Activated CD4-positive, alpha-beta memory T cell treated with anti-CD3 and anti-CD28 coated beads, Interleukin-2, amount 10 ng/mL, durations not matched to agents 7 days and 5 days (primary cell): ENCODE measurements at regions of chr12 and their contacts with region 1.

Region 1: GRCh38 chr12:47079468-47079980 is at the starts of genes AMIGO2 and PCED1B:
- DNase-seq: peak; percentile 68
- H3K4me3 Mint-ChIP-seq: peak within 1 kb of the TSS; percentile 92
- H3K27ac Mint-ChIP-seq: peak within 1 kb of the TSS; percentile 79
- H3K4me1 Mint-ChIP-seq: peaks cover 67% of the 10 kb centered on the region
- H3K27me3 Mint-ChIP-seq: no peaks in the 10 kb centered on the region
- total RNA-seq, gene AMIGO2: 6.6 to 7.1 TPM
- total RNA-seq, gene PCED1B: 57.1 to 62.2 TPM

Region 2: DNA sequence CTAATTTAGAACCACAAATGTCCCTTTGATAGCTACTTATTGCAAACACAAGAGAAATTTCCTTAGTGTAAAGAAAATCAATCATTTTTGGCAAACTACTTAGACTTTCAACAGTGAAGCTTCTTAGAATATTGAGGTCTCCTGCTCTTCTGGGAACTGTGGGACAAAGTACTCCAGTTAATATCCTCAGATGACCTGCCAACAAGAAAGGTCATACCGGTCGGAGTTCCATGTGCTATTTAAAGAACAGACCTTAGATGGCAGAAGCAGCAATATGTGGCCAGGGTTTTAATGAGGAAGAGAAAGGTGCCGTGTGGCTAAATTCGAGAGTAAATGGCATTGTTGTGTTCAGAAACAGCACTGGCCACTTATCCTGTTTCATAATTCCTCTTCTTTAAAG is 115.0 kb after region 1 on chr12:
- CTCF ChIA-PET with region 1: interaction called, 27 read pairs
- POLR2A ChIA-PET with region 1: interaction called, 20 read pairs
- DNase-seq: no peak
- H3K4me3 Mint-ChIP-seq: no peak overlapping the region
- H3K27ac Mint-ChIP-seq: peak overlapping the region; percentile 84
- H3K4me1 Mint-ChIP-seq: peaks cover 56% of the 10 kb centered on the region
- H3K27me3 Mint-ChIP-seq: no peaks in the 10 kb centered on the region

Region 3: DNA sequence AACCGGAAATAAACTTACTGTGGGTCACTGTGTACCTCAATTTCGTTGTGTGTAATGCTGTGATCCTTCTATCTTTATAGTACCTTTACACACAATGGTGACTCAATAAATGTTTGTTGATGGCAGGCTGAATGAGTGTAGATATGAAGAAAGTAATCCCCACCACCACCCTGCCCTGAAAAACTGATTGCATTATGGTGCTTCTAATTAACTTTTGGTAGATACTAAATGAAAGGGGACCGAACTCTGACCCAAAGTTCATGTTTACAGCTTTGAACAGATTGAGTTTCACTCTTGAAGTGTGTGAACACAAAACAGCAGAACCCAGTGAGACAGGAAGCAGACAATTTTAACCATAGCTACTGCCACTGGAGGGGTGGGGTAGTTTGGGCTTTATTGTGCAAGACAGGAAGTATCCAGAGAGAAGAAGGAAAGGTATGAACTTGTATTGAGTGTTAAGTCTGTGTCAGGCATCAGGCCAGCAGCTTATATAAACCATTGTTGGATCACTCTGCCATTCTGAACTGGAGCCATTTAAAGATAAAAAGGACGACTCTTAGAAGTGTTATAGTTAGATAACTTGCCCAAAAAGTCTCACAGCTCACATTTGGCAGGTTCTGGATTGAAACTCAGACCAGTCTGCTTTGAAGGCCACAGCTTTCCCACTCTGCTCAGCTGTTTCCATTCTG is 197.2 kb after region 1 on chr12:
- CTCF ChIA-PET with region 1: interaction called, 4 read pairs
- POLR2A ChIA-PET with region 1: interaction called, 12 read pairs
- DNase-seq: peak; percentile 73
- H3K4me3 Mint-ChIP-seq: peak overlapping the region; percentile 48
- H3K27ac Mint-ChIP-seq: peak overlapping the region; percentile 87
- H3K4me1 Mint-ChIP-seq: peaks cover 55% of the 10 kb centered on the region
- H3K27me3 Mint-ChIP-seq: no peaks in the 10 kb centered on the region

Region 4: GRCh38 chr12:47391566-47391965 is 312.0 kb after region 1 on chr12:
- CTCF ChIA-PET with region 1: interaction called, 34 read pairs
- POLR2A ChIA-PET with region 1: interaction called, 10 read pairs
- DNase-seq: peak; percentile 78
- H3K4me3 Mint-ChIP-seq: peak overlapping the region; percentile 12
- H3K27ac Mint-ChIP-seq: peak overlapping the region; percentile 95
- H3K4me1 Mint-ChIP-seq: peaks cover 79% of the 10 kb centered on the region
- H3K27me3 Mint-ChIP-seq: no peaks in the 10 kb centered on the region